ENCODE measurements at regions of chr5 and their contacts with region 1.

Region 1: GRCh38 chr5:77638763-77639671 is 504 bp upstream of the OTP start:
- DNase-seq: no peak

Region 2: GRCh38 chr5:76990899-76991459 is 648.0 kb before region 1 on chr5:
- intact Hi-C with region 1: loop called in 1 of 2 experiments (anchors 5 kb)
- DNase-seq: no peak

Region 3: DNA sequence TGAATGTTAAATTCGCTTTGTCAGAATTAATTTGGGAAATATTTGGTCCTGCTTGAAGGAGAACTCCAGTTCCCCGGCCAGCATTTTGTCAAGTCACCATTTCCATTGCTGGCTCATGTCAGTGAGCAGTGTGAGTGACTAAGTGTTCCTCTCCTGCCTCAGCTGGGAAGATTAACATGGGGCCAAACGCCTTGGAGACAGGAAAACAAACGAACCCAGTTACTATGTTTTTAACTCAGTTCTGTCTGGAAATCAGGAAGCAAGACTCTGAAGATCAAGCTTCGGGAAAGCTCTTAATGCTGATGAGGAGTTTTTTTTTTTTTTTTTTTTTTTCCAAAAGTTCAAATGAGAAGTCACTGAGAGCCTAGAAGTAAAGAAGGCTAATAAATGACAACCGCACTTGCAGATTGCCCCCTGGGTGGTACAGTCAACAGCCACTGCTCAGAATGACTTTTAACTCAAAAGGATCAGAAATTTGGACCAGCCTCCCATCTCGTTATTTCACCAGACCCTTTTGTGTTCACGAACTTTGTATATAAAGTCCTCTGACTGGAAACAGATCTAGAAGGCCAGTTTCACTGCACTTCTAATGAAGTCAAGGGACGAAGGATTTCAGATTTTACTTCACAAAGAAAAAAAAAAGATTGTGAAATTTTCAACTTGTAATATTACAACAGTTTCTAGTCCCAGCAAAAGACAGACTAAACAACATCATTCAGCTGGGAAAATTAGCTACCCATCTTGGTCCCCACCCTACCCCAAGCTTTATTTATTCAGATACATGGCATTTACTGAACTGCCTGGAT is 888.2 kb after region 1 on chr5:
- intact Hi-C with region 1: no loop called
- DNase-seq: peak; percentile 86

Measured in posterior vena cava (tissue), 2 donors.